CD4-positive, alpha-beta T cell (primary cell): ENCODE measurements at regions of chr2 and their contacts with region 1.

Region 1: DNA sequence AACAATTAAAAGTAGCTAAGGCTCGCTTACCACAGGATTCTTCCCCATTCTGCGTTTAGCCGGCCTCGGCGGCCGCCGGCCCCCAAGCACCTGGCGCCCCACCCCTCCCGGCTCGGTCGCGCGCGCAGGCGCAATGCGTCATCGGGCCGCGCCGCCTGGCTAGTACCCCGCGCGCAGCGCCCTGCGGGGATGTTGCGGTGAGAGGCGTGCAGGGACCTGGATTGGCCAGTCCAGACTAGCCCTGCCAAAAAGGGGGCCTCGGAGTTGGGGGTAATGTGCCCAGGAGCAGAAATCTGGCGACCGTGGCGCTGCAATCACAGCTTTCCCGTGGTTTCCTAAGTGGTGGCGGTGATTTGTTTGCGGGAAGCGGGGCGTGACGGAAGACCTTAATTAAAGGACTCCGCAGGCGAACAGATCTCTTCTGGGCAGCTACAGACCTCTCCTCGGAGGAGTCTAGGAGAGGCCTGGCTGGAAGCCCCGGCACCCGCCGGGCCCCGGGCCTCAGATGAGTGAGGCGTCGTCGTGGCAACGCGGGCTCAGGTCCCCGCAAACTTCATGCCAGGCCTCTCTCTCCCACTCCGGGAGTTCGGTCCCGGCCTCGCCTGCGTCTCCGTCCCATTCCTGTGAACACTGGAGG is 606 bp downstream of the TMEM237 start:
- DNase-seq: peak; percentile 68 to 92 (median 80)
- ATAC-seq: peak; percentile 88
- H3K4me3 ChIP-seq: peak overlapping the region; percentile 95
- H3K4me3 Mint-ChIP-seq: peak overlapping the region; percentile 96
- H3K27ac ChIP-seq: peak overlapping the region; percentile 79 to 89
- H3K27ac Mint-ChIP-seq: peak overlapping the region; percentile 96
- H3K4me1 ChIP-seq: peaks cover 9% of the 10 kb centered on the region
- H3K4me1 Mint-ChIP-seq: peaks cover 10% of the 10 kb centered on the region
- H3K27me3 ChIP-seq: no peaks in the 10 kb centered on the region
- H3K27me3 Mint-ChIP-seq: no peaks in the 10 kb centered on the region
- CTCF ChIP-seq: peak; percentile 11

Region 2: DNA sequence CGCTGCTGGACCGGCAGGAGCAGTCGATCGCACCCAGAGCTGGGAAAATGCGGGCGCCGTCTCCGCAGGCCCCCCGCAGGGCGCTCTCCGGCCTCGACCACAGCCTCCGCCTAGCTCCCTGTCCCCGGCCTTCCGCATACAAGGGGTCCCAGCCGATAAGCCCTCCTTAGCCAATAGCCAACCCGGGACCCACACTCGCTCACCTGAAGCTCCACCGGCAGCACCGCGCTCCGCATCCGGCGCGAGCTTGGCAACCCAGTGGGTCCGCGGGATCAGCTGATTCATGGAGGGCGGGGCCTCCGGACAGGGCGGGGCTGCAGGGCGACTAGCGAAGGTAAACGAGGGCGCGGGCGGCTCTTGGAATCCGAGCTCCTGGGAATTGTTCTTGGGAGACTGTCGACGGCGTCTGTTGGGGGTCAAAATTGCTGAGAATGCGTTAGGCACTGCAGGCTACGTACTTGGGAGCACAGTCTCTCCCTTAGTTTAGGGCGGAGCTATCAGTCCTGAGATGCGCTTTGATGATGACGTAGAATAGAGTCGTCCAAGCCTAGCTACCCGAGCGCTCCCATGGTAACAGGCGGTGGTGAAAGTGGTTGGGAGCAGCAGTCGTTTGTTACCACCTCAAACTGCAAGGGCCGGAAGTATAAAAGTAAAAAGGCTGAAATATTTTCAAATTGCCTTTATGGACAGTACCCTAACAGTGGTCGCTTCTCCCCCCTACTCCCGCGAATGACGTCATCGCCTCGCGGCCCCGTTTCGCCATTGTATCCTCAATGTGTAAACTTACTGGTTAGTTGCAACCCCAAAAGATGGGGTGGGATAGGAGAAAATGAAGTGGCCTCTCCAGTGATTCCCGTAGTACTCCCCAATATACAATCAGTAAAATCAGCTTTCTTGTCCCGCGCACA is 138.2 kb after region 1 on chr2 and contains the start of gene ALS2:
- CTCF ChIA-PET with region 1: interaction called, 3 read pairs
- POLR2A ChIA-PET with region 1: interaction called, 26 read pairs
- intact Hi-C with region 1: loop called (anchors 2 to 5 kb)
- DNase-seq: peak; percentile 86 to 96 (median 92)
- ATAC-seq: peak; percentile 90
- H3K4me3 ChIP-seq: peak within 1 kb of the TSS; percentile 66
- H3K4me3 Mint-ChIP-seq: peak within 1 kb of the TSS; percentile 98
- H3K27ac ChIP-seq: peak within 1 kb of the TSS; percentile 77 to 88
- H3K27ac Mint-ChIP-seq: peak within 1 kb of the TSS; percentile 93
- H3K4me1 ChIP-seq: peaks cover 15% of the 10 kb centered on the region
- H3K4me1 Mint-ChIP-seq: peaks cover 20% of the 10 kb centered on the region
- H3K27me3 ChIP-seq: no peaks in the 10 kb centered on the region
- H3K27me3 Mint-ChIP-seq: no peaks in the 10 kb centered on the region
- CTCF ChIP-seq: no peak
- total RNA-seq, gene ALS2: 7.0 to 7.2 TPM